ENCODE measurements at regions of chr18 and their contacts with region 1.

Region 1: DNA sequence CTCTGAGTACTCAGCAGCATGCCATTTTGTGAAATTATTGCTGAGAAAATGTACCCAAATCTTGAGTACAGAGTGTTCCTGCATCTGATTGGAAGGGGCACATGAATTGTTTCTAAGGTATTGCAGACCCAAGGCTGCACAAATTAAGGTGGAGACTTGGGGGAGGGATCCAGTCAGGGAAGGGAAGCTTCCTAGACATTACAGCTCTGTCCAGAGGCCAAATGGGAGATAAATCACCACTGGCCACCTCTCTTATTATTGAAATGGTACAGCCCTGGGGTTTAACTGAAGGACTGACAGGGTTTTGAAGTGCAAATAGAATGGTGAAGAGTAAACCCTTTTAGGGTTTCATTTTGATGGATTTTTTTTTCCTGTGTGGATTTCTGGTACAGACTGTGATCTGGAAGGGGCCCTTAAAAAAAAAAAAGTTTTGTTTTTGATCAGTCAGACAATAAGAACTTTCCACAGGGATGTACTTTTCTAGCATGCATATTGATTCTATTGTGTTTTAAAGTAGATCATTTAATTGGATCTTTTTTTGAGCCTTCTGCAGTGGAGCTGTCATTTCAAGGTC is 119.4 kb downstream of the GREB1L start:
- DNase-seq: no peak
- ATAC-seq: peak in 1 of 8 donors; percentile 22
- H3K4me3 ChIP-seq: no peak overlapping the region
- H3K27ac ChIP-seq: no peak overlapping the region
- H3K4me1 ChIP-seq: peaks cover 0 to 8% (median 0%) of the 10 kb centered on the region in 9 donors
- H3K27me3 ChIP-seq: peaks cover 0 to 3% (median 0%) of the 10 kb centered on the region in 7 donors
- CTCF ChIP-seq: no peak

Region 2: GRCh38 chr18:21315741-21316187 is 45.6 kb before region 1 on chr18:
- intact Hi-C with region 1: loop called in 1 of 10 experiments (anchors 10 kb)
- DNase-seq: no peak
- ATAC-seq: peak in 1 of 8 donors; percentile 55
- H3K4me3 ChIP-seq: no peak overlapping the region
- H3K27ac ChIP-seq: no peak overlapping the region
- H3K4me1 ChIP-seq: no peaks in the 10 kb centered on the region
- H3K27me3 ChIP-seq: no peaks in the 10 kb centered on the region
- CTCF ChIP-seq: no peak

Region 3: DNA sequence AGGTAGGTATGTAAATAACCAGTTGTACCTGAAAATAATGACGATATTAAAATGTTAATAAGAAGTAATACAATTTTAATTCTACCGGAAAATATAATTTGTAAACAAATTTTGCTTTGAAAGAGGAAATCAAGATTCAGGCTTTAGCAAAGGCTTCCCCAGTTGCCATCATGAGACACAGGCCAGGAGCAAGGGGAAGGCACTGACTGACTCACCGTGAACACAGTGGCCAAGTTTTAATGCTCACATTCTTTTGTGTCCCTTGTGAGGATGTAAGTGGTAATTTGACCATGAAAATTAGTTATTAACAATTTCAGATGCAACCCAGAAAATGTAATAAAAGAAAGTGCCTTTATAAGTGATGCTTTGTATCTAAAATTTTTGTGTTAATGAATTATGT is 44.7 kb after region 1 on chr18:
- intact Hi-C with region 1: loop called in 1 of 10 experiments (anchors 10 kb)
- DNase-seq: no peak
- ATAC-seq: no peak
- H3K4me3 ChIP-seq: no peak overlapping the region
- H3K27ac ChIP-seq: no peak overlapping the region
- H3K4me1 ChIP-seq: no peaks in the 10 kb centered on the region
- H3K27me3 ChIP-seq: no peaks in the 10 kb centered on the region
- CTCF ChIP-seq: no peak